ENCODE measurements at regions of chr7 and their contacts with region 1.

Region 1: DNA sequence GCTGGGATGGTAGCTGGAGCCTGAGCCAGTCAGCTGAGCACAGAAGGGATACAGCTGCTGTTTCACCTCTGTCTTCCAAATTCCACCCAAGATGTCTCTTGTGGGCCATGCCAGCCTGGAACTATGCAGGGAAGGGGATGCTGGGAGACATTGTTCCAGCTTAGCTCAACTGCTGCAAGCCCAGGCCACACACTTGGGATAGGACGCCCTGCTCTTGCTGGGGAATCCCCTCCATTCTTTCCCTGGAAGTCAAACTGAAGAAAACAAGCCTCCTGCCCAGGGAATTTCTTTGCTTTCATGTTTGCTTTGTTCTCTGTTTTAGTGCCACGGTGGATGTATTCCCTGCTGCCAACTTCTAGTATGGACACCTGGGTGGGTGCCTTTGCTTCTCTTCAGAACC is 55.2 kb upstream of the CDK13 start:
- DNase-seq: no peak
- H3K4me3 ChIP-seq: no peak overlapping the region
- H3K27ac ChIP-seq: no peak overlapping the region
- H3K27me3 ChIP-seq: peaks cover 0 to 7% (median 0%) of the 10 kb centered on the region in 45 donors
- CTCF ChIP-seq: no peak

Region 2: DNA sequence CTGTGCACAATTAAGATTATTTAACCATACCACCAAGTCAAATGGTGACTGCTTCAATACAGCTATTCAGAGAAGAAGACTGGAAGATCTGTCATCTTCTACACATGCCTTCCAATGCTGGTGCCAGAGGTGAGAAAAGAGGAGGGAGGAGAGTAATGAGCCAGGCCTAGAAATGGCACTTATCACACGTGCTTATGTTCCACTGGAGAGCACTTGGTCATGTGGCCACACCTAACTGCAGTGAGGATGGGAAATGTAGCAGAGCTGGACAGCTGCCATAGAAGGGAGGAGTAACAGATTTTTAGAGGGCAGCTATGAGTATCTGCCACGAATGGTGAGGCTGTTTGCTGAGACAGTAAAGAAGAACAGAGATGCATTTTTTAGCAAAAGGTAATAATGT is 162.4 kb after region 1 on chr7:
- intact Hi-C with region 1: loop called (anchors 2 to 5 kb)
- DNase-seq: no peak
- H3K4me3 ChIP-seq: no peak overlapping the region
- H3K27ac ChIP-seq: no peak overlapping the region
- H3K27me3 ChIP-seq: no peaks in the 10 kb centered on the region
- CTCF ChIP-seq: no peak

Region 3: GRCh38 chr7:40120020-40120419 is 225.1 kb after region 1 on chr7:
- intact Hi-C with region 1: no loop called
- DNase-seq: no peak
- H3K4me3 ChIP-seq: no peak overlapping the region
- H3K27ac ChIP-seq: no peak overlapping the region
- H3K27me3 ChIP-seq: no peaks in the 10 kb centered on the region
- CTCF ChIP-seq: no peak

Region 4: GRCh38 chr7:40134428-40135316 is 239.8 kb after region 1 on chr7 and contains the starts of genes MPLKIP and SUGCT:
- intact Hi-C with region 1: loop called (anchors 2 to 5 kb)
- DNase-seq: peak; percentile 67 to 91 (median 80)
- H3K4me3 ChIP-seq: peak within 1 kb of the TSS; percentile 73 to 99 (median 91)
- H3K27ac ChIP-seq: peak within 1 kb of the TSS; percentile 60 to 97 (median 92)
- H3K27me3 ChIP-seq: no peaks in the 10 kb centered on the region
- CTCF ChIP-seq: peak; percentile 77 to 99 (median 94)
- total RNA-seq, gene MPLKIP: 15.8 to 40.1 (median 27.3) TPM
- total RNA-seq, gene SUGCT: 1.4 to 11.5 (median 3.3) TPM